AG04450 (cell line): ENCODE measurements at regions of chr7 and their contacts with region 1.

Region 1: GRCh38 chr7:22577396-22578001 is 77.5 kb upstream of the STEAP1B start:
- DNase-seq: peak; percentile 91
- H3K4me3 ChIP-seq: no peak overlapping the region
- H3K27ac ChIP-seq: peak overlapping the region; percentile 90
- H3K27me3 ChIP-seq: no peaks in the 10 kb centered on the region
- CTCF ChIP-seq: no peak

Region 2: DNA sequence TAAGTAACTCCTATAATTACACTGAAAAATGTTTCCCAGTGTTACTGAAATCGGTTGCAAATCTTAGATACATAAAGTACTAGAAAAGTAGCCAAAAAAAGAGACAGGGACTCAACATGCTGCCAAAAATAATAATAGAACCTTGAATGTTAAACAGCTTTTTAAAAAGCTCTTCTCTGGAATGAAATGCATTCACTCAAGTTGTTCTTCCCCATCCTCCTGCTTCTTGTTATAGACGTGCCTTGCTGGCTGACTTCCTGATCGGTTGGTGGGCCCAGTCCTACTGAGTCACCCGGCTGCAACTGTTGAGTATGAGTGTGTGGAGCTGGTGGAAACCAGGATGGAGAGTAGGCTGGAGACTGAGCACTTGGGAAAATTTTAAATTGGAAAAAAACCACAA is 189.9 kb before region 1 on chr7:
- CTCF ChIA-PET with region 1: no interaction called
- POLR2A ChIA-PET with region 1: no interaction called
- DNase-seq: no peak
- H3K4me3 ChIP-seq: no peak overlapping the region
- H3K27ac ChIP-seq: no peak overlapping the region
- H3K27me3 ChIP-seq: no peaks in the 10 kb centered on the region
- CTCF ChIP-seq: no peak

Region 3: DNA sequence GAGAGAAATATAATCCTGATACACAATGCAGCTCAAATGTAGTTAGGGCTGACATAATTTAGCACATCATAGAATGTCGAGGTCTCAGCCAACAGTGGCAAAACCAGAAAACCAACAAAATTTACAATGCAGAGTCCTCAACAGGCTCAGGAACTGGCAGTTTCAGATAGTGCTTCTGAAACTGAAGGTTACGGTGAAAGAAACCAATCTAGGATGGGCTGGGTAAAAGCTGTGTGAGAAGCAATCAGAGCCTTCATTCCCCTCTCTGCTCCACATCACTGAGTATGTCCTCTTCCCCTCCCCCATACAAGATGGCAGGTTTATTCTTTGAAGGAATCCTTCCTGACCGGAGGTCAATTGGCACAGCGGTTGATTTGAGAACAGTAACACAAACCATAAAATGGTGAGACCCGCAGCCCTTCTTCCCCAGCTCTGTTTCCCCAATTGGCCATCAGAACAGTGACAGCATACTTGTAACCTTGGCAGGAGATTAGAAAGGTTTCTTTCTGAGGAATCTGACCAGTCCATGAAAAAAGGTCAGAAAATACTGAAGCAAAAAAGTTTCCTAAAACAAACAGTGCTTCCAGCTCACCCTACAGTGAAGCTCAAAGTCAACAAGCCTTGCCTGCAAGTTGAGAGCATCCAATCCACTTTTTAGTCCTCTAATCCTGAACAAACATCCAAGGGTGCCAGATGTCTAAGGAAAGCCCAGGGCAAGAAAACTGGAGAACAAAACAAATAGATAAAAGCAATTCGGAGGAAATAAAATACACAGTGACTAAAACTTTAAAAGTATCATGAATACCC is 95.5 kb after region 1 on chr7:
- CTCF ChIA-PET with region 1: no interaction called
- POLR2A ChIA-PET with region 1: interaction called, 11 read pairs
- DNase-seq: no peak
- H3K4me3 ChIP-seq: no peak overlapping the region
- H3K27ac ChIP-seq: peak overlapping the region; percentile 13
- H3K27me3 ChIP-seq: no peaks in the 10 kb centered on the region
- CTCF ChIP-seq: no peak

Region 4: DNA sequence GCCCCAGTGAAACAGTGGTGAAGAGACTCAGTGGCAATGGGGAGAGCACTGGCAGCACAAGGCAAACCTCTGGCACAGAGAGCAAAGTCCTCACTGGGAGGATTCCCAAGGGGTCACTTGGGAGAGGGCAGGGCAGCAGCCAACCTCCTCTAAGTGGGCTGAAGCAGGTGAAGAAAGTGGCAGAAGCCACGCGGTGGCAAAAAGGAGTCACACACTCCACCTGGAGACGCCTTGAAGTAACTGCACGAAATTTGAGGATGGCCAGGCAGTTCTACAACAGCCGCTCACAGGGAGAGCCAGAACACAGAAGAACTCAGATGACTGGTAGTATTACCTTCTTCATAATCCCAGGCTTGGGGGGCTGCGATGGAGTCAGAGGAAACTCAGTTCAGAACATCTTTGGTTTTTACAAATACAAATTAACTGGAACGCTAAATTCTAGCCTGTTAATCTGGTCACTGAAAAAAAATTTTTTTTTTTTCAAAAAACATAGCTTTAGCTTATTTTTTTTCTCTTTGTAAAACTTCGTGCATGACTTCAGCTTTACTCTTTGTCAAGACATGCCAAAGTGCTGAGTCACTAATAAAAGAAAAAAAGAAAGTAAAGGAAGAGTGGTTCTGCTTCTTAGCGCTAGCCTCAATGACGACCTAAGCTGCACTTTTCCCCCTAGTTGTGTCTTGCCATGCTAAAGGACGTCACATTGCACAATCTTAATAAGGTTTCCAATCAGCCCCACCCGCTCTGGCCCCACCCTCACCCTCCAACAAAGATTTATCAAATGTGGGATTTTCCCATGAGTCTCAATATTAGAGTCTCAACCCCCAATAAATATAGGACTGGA is 149.1 kb after region 1 on chr7:
- CTCF ChIA-PET with region 1: interaction called, 15 read pairs
- POLR2A ChIA-PET with region 1: interaction called, 7 read pairs
- DNase-seq: peak; percentile 83
- H3K4me3 ChIP-seq: peak overlapping the region; percentile 76
- H3K27ac ChIP-seq: peak overlapping the region; percentile 97
- H3K27me3 ChIP-seq: no peaks in the 10 kb centered on the region
- CTCF ChIP-seq: peak; percentile 66

Region 5: DNA sequence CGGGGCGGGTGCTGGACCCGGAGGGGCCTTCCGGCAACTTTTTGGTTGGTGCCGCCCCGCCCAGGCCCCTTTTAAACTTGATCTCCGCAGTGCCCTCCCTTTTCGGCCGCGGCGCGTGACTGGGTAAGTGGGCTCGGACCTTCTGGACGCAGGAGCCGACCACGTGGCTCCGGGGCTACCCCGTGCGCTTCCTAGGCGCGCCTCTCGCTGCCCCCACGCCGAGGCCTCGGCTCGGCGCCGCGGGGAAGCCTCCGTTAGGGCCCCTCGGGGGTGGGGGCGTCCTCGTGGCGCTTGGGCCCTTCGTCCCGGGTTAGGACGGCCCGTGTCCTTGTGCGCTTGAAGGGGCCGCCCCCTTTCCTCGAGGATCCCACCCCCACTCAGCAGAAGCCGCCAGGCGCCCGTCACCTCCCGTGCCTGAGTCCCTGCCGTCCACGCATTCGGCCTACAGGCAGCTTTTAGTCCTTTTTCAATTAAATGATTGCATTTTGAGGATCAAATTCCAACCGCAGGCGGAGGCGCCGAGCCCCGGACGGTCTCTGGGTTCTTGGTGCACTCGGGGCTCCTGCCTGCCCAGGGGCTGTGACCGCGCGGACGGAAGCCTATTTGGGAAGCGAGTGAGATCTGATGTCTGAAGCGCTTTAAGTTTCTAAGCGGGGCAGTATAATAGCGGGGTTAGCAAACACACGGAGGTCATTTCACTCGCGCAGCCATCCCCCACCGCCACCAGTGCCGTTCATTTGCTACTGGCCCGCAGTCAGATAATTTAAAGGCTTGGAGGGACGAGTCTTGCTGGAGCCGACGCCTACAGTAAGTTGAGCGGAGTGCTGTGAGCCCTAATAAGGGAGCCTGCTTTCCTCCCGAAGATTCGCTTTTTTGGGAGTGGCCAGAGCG is 276.9 kb after region 1 on chr7:
- CTCF ChIA-PET with region 1: no interaction called
- POLR2A ChIA-PET with region 1: interaction called, 12 read pairs
- DNase-seq: no peak
- H3K4me3 ChIP-seq: peak overlapping the region; percentile 69
- H3K27ac ChIP-seq: peak overlapping the region; percentile 93
- H3K27me3 ChIP-seq: no peaks in the 10 kb centered on the region
- CTCF ChIP-seq: no peak; the same call in none of the 2 replicates